Mucosa of descending colon (tissue), 3 donors: ENCODE measurements at regions of chr18 and their contacts with region 1.

Region 1: DNA sequence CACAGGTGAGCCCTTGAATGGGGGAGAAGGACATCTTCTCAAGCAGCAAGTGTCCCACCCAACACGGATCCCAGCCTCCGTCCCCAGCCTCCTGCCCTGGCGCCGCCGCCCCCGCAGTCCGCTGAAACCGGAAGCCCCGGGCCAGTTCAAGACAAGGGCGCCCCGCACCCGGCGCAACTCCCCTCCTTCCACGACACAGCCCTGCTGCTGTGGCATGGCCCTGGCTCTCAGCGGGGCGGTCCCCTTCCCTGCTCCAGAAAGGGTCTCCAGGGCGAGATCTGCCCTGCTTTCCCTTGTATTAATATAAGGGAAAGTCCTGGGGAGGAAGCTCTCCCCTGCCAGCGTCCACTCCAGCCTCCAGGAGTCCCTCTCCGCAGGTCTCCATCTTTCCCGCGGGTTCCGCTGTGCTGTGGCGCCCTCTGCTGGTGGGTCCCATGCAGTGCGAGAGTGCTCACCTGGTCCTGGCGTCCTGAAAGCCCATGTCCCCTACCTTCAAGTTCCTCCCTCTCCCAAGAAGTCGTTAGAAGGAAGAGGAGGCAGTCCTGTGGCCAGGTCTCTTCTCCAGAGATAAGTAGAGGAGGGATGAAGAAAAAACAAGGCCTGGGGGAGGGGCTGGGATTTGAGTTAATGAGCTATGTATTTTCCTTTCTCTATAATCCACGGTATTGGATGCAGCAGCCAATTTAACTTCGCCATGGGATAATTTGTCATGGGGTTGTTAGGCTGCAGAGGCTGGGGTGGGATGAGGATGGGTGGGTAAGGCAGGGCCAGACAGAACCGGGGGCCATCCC is 176.0 kb downstream of the SMAD2 start:
- DNase-seq: peak in 2 of 3 donors; percentile 57 to 72
- ATAC-seq: peak; percentile 80
- H3K4me3 ChIP-seq: no peak overlapping the region
- H3K4me1 ChIP-seq: no peaks in the 10 kb centered on the region
- CTCF ChIP-seq: peak; percentile 80

Region 2: DNA sequence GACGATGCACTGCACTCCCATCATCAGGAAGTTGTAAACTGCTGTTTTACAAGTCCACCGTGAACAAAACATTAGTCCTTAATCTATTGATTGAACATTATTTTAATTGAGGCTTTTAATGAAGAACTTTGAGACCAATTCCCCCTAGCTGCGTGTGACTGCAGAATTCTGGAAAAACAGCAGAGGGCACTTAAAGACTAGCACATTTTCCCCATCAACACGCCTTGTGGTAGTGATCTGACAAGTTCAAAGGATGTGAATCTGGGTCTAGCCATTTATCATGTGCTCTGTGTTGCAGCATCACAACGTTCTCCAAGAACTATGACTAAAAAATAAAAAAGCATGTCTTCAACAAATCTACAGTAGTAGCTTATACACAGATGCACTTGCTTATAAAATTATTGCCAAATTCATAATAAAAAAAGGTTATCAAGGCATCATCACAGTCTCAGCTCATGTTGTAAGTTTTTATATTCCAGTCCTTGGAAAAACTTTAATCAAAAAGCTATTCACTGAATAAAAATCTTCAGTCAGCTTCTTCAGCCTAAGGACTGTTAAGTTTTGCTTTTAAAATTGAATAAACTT is 538.9 kb before region 1 on chr18:
- intact Hi-C with region 1: loop called in 1 of 2 experiments (anchors 5 kb)
- DNase-seq: peak in 1 of 3 donors; percentile 14
- ATAC-seq: no peak
- H3K4me3 ChIP-seq: no peak overlapping the region
- H3K4me1 ChIP-seq: no peaks in the 10 kb centered on the region
- CTCF ChIP-seq: no peak